ENCODE measurements at regions of chr1 and their contacts with region 1.

Region 1: GRCh38 chr1:40722636-40723035 is 31.1 kb downstream of the NFYC start:
- DNase-seq: no peak
- H3K4me3 ChIP-seq: no peak overlapping the region
- H3K27me3 ChIP-seq: no peaks in the 10 kb centered on the region
- CTCF ChIP-seq: no peak

Region 2: DNA sequence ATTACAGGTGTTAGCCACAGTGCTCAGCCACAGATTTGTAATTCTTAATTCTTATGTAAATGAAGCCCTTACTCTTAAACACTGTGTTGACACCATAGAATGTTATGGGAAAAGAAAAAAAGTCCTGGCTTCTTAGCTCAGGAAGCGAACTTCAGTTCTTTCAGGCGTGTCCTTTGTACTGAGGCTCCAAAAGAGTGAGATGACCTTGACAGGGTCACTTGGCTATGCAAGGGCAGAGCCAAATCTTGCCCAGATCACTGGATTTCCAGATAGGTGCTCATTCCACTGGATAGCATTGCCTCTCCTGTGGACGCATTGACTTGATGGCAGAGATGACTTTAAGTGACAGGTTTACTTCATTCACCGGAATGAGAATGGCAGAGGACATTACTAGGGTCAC is 26.3 kb before region 1 on chr1:
- CTCF ChIA-PET with region 1: no interaction called
- POLR2A ChIA-PET with region 1: no interaction called
- DNase-seq: no peak
- H3K4me3 ChIP-seq: no peak overlapping the region
- H3K27me3 ChIP-seq: no peaks in the 10 kb centered on the region
- CTCF ChIP-seq: no peak

Region 3: GRCh38 chr1:40709100-40709801 is 13.4 kb before region 1 on chr1:
- CTCF ChIA-PET with region 1: interaction called, 5 read pairs
- POLR2A ChIA-PET with region 1: interaction called, 11 read pairs
- DNase-seq: peak; percentile 85
- H3K4me3 ChIP-seq: peak overlapping the region; percentile 57
- H3K27me3 ChIP-seq: no peaks in the 10 kb centered on the region
- CTCF ChIP-seq: no peak

Measured in BJ (cell line).